HepG2 (cell line): ENCODE measurements at regions of chr15 and their contacts with region 1.

Region 1: GRCh38 chr15:74655424-74655823 is 39.8 kb downstream of the CLK3 start:
- DNase-seq: no peak
- ATAC-seq: no peak
- H3K4me3 ChIP-seq: no peak overlapping the region
- H3K27ac ChIP-seq: no peak overlapping the region
- H3K4me1 ChIP-seq: peaks cover 19% of the 10 kb centered on the region
- H3K27me3 ChIP-seq: no peaks in the 10 kb centered on the region
- CTCF ChIP-seq: no peak
- EP300 ChIP-seq: no peak
- POLR2A ChIP-seq: no peak
- RAD21 ChIP-seq: no peak

Region 2: GRCh38 chr15:74695597-74696397 is 40.4 kb after region 1 on chr15 and contains the start of gene EDC3:
- CTCF ChIA-PET with region 1: no interaction called
- POLR2A ChIA-PET with region 1: no interaction called
- in situ Hi-C with region 1: no loop called
- intact Hi-C with region 1: loop called (anchors 1 kb)
- DNase-seq: peak; percentile 79
- ATAC-seq: peak; percentile 96
- H3K4me3 ChIP-seq: peak within 1 kb of the TSS; percentile 92 to 99 (median 93)
- H3K27ac ChIP-seq: peak within 1 kb of the TSS; percentile 74
- H3K4me1 ChIP-seq: peaks cover 38% of the 10 kb centered on the region
- H3K27me3 ChIP-seq: peaks cover 2 to 4% of the 10 kb centered on the region in 2 experiments; a peak in 2 of 5 replicates
- CTCF ChIP-seq: peak; percentile 8; the same call in 1 of the 2 replicates
- EP300 ChIP-seq: no peak
- POLR2A ChIP-seq: peak; percentile 24 to 49; a peak in 1 of 4 replicates
- RAD21 ChIP-seq: no peak
- total RNA-seq, gene EDC3: 17.4 and 24.3 TPM in 2 replicates

Region 3: DNA sequence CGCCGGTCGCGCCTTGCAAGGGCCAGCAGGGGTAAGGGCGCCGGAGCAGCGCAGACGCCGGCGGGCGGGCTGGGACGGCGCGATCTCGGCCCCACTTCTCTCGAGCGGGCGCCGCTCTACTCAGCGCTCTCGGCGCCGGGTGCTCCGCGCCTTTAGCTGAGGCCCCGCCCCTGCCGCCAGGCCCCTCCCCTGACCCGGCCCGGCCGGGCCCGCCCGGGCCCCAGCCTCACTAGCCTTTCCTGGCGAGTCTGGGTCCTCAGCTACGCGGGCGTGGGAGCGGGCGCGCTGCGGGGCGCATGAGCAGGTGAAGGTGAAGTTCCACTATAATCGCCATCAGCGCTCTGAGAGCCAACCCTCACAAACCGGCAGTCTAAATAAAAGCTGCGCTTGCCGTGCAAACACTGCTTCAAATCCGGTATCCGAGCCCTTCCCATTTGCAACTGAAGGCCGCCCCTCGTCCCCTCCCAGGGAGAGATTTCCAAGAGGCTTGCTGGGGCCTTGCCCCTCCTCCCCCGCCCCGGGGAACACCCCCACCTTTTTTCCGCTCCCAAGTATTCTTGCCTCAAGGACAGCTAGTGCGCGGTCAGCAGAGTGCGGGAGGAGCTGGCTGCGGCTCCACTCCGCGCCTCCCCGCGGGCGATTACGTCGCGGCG is 301.4 kb after region 1 on chr15 and contains the start of gene RPP25:
- CTCF ChIA-PET with region 1: no interaction called
- POLR2A ChIA-PET with region 1: no interaction called
- in situ Hi-C with region 1: no loop called
- intact Hi-C with region 1: no loop called
- DNase-seq: peak; percentile 27
- ATAC-seq: peak; percentile 84
- H3K4me3 ChIP-seq: peak within 1 kb of the TSS; percentile 60 to 78 (median 63)
- H3K27ac ChIP-seq: no peak within 1 kb of the TSS
- H3K4me1 ChIP-seq: peaks cover 18% of the 10 kb centered on the region
- H3K27me3 ChIP-seq: peaks cover 5 to 56% of the 10 kb centered on the region in 2 experiments; a peak in 4 of 5 replicates
- CTCF ChIP-seq: no peak
- EP300 ChIP-seq: no peak
- POLR2A ChIP-seq: no peak; a peak in 1 of 4 replicates
- RAD21 ChIP-seq: no peak
- total RNA-seq, gene RPP25: 0.08 and 0.11 TPM in 2 replicates